ENCODE measurements at regions of chr4 and their contacts with region 1.

Region 1: GRCh38 chr4:184263910-184264732 is 46.4 kb upstream of the ENPP6 start:
- DNase-seq: peak; percentile 91
- ATAC-seq: peak; percentile 60
- H3K4me3 Mint-ChIP-seq: peak overlapping the region; percentile 43
- H3K27ac Mint-ChIP-seq: peak overlapping the region; percentile 65
- H3K4me1 Mint-ChIP-seq: peaks cover 45% of the 10 kb centered on the region
- H3K27me3 Mint-ChIP-seq: peaks cover 7% of the 10 kb centered on the region

Region 2: DNA sequence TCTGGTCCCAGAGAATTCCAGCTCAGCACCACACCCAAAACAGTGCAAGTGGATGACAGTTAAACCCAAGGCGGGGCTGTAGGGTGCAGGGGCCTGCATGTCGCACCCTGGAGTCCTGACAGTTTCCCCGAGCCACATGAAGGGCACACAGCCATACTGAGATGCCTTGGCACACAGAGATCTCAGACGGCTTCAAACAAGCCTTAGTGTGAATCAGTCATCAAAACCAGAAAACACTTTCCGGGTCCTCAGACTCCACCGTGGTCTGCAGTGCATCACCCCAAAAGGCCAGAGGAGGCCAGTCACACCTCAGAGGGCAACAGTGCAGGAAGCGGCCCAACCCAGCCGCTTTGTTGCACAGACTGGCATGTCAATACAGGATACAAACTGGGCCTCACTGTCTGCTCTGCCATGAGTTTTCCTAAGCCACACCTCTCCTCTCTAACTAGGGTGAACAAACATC is 18.2 kb after region 1 on chr4:
- POLR2A ChIA-PET with region 1: interaction called, 16 read pairs
- DNase-seq: peak; percentile 61
- ATAC-seq: peak; percentile 83
- H3K4me3 Mint-ChIP-seq: no peak overlapping the region
- H3K27ac Mint-ChIP-seq: peak overlapping the region; percentile 80
- H3K4me1 Mint-ChIP-seq: peaks cover 40% of the 10 kb centered on the region
- H3K27me3 Mint-ChIP-seq: no peaks in the 10 kb centered on the region

Region 3: GRCh38 chr4:184329659-184330400 is 65.7 kb after region 1 on chr4:
- POLR2A ChIA-PET with region 1: no interaction called
- DNase-seq: no peak
- ATAC-seq: no peak
- H3K4me3 Mint-ChIP-seq: no peak overlapping the region
- H3K27ac Mint-ChIP-seq: no peak overlapping the region
- H3K4me1 Mint-ChIP-seq: peaks cover 10% of the 10 kb centered on the region
- H3K27me3 Mint-ChIP-seq: no peaks in the 10 kb centered on the region

Region 4: DNA sequence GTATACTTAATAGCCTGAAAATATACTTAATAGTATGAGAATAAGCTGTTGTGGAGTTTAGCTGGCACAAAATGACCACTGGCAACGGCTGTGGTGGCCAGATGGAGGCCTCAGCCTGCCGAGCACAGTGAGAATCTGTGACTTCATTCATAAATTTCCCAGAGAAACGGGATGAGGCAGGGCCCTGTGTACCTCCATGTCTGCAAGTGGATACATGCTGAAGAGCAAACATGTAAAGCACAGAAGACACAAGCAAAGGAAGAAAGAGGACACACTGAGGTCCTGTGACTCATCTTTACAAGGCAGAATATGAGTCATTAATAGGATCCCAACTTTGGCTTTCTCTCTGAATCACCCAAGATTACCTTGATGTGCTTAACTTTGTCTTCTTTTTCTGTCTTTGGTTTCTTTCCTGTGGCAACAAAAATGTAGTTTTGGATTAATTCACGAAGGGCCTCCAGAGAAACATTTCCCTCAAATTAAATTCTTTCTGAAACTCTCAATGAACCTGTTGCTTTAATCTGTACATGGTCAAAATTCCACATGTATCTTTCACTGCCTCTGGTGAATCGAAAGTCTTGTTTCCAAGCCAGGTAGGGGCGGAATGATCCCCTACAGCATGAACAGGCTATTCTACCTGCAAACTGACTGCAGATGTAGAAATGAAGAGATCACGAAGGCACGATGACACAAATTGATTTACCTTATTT is 153.8 kb after region 1 on chr4:
- POLR2A ChIA-PET with region 1: interaction called, 11 read pairs
- DNase-seq: no peak
- ATAC-seq: peak; percentile 81
- H3K4me3 Mint-ChIP-seq: peak overlapping the region; percentile 88
- H3K27ac Mint-ChIP-seq: peak overlapping the region; percentile 99
- H3K4me1 Mint-ChIP-seq: peaks cover 60% of the 10 kb centered on the region
- H3K27me3 Mint-ChIP-seq: no peaks in the 10 kb centered on the region

Region 5: DNA sequence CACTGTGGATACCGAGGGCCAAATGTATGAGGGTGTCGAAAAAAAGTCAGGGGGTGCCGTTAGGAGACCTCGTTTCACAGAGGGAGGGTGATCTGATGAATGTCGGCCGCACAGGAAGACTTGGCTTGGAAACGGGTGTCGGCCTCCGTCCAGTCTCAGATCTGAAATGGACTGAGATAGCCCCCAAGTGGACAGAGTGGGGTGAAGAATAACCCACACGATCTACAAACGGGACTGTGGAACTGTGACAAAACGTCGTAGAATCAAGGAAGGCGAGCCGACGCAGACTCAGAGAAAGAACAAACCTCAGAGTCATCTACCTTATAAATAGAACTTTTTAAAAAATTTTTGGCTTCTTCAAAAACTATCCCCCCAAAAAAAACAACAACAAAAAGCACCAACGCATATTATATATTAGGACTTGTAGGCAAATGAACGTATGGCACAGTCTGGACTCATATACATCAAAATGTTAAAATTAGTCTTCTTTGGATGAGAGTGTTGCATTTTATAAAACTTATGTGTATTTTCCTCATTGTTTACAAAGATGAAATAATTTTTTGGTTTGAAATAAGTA is 274.0 kb after region 1 on chr4:
- POLR2A ChIA-PET with region 1: interaction called, 13 read pairs
- DNase-seq: peak; percentile 56
- ATAC-seq: peak; percentile 53
- H3K4me3 Mint-ChIP-seq: peak overlapping the region; percentile 90
- H3K27ac Mint-ChIP-seq: peak overlapping the region; percentile 89
- H3K4me1 Mint-ChIP-seq: peaks cover 35% of the 10 kb centered on the region
- H3K27me3 Mint-ChIP-seq: no peaks in the 10 kb centered on the region

Region 6: DNA sequence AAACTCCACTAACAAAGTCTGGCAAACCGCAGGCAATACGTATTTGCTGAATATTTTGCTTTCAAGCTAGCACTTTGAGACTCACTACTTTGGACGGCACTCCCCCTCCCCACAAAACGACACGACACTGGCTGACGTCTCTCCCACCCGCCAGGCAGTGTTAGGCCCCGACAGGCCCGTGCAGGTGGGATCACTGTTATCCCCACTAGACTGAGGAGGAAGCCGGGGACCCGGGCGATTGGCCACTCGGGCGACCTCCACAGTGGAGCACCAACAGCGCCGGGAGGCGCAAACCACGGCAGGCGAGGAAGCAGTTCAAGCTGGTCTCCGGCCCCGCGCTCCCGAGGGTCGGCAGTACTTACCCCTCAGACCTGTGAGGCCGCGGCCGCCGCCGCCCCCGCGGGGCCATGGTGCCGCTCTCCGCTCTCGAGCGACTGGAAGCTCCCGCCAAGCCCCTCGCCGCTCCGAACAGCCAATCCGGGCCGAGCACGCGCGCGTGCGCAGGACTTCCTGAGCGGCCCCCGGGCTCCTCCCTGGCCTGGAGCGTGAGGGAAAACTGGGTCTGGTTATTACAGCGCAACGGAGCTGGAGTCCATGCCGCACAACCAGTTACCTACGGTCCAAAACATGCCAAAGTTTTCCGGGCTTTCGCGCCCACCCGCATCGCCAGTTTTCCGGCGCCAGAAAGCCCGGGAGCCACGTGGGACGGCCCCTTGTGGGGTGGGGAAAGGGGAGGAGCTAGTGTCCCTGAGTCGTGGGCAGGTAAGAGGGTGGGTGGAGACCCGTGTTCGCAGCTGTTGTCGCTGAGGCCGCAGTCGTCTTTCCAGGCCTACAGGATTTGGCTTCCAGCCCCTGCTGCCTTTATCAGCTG is 469.8 kb after region 1 on chr4 and contains the start of gene CENPU:
- POLR2A ChIA-PET with region 1: interaction called, 14 read pairs
- DNase-seq: peak; percentile 97
- ATAC-seq: peak; percentile 97
- H3K4me3 Mint-ChIP-seq: peak within 1 kb of the TSS; percentile 99
- H3K27ac Mint-ChIP-seq: peak within 1 kb of the TSS; percentile 96
- H3K4me1 Mint-ChIP-seq: peaks cover 28% of the 10 kb centered on the region
- H3K27me3 Mint-ChIP-seq: no peaks in the 10 kb centered on the region
- total RNA-seq, gene CENPU: 46.0 to 50.1 TPM

Measured in activated naive CD8-positive, alpha-beta T cell treated with anti-CD3 and anti-CD28 coated beads, Interleukin-2, amount 10 ng/mL, durations not matched to agents 7 days and 5 days (primary cell).